ENCODE measurements at regions of chr10 and their contacts with region 1.

Region 1: DNA sequence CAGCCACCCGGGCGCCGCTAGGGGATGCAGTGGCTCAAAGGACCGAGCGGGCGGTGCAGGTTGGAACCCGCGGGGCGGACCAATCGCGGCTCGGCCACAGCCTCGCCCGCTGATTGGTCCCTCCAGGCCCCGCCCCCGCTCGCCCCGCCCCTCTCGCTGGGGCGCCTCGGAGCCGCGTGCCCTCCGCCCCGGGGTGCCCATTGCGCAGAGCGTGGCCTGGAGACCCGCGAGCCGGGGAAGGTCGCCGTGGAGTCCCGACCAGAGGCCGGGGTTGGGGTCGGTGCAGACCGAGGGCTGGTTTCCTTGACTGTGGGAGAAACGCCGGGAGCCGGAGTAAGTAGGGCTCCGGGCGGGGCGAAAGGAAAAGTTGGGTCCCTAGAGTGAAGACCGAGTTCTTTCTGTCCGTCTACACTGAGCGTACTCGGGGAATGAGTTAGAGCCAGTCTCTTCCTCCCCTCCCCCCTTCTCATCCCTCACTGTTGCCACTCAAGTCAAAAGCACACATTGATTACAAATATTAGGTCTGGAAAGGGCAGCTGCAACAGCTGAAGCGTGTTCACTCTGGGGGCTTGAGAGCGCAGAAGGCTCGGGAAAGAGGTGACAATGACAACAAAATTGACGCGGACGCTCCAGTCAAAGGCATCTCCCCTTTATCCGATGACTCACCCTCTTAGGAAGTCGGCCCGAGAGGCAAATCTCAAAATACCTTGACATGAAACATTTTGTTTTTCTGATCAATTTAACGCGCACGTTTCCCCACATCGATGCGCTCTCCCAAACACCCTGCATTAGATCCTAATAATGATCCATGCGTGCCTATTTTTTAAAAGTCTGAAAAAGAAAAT is 820 bp upstream of the GATA3 start:
- DNase-seq: peak; percentile 73 to 97 (median 89)
- ATAC-seq: peak; percentile 77
- H3K4me3 ChIP-seq: peak overlapping the region; percentile 87
- H3K4me3 Mint-ChIP-seq: peak overlapping the region; percentile 87 to 97 (median 94)
- H3K27ac ChIP-seq: peak overlapping the region; percentile 82
- H3K27ac Mint-ChIP-seq: peak overlapping the region; percentile 88 to 99 (median 95)
- H3K4me1 ChIP-seq: peaks cover 26 to 42% of the 10 kb centered on the region in 2 donors
- H3K4me1 Mint-ChIP-seq: peaks cover 14 to 45% (median 37%) of the 10 kb centered on the region in 7 donors
- H3K27me3 ChIP-seq: peaks cover 19 to 32% of the 10 kb centered on the region in 2 donors
- H3K27me3 Mint-ChIP-seq: peaks cover 20 to 30% (median 22%) of the 10 kb centered on the region in 5 donors

Region 2: GRCh38 chr10:7787857-7788638 is 265.6 kb before region 1 on chr10 and contains the starts of genes ATP5F1C and KIN:
- CTCF ChIA-PET with region 1: no interaction called
- POLR2A ChIA-PET with region 1: no interaction called
- intact Hi-C with region 1: loop called (anchors 1 to 5 kb)
- DNase-seq: peak; percentile 93 to 98 (median 96)
- ATAC-seq: peak; percentile 98
- H3K4me3 ChIP-seq: peak within 1 kb of the TSS; percentile 79
- H3K4me3 Mint-ChIP-seq: no peak within 1 kb of the TSS
- H3K27ac ChIP-seq: peak within 1 kb of the TSS; percentile 84
- H3K27ac Mint-ChIP-seq: peak within 1 kb of the TSS in 1 of 9 donors; percentile 90
- H3K4me1 ChIP-seq: peaks cover 21 to 28% of the 10 kb centered on the region in 2 donors
- H3K4me1 Mint-ChIP-seq: peaks cover 47 to 77% (median 57%) of the 10 kb centered on the region in 7 donors
- H3K27me3 ChIP-seq: no peaks in the 10 kb centered on the region
- H3K27me3 Mint-ChIP-seq: no peaks in the 10 kb centered on the region
- total RNA-seq, gene ATP5F1C: 113 to 290 (median 122) TPM
- total RNA-seq, gene KIN: 7.2 to 18.4 (median 14.3) TPM

Region 3: GRCh38 chr10:7872041-7872442 is 181.6 kb before region 1 on chr10:
- CTCF ChIA-PET with region 1: no interaction called
- POLR2A ChIA-PET with region 1: no interaction called
- intact Hi-C with region 1: loop called (anchors 5 to 10 kb)
- DNase-seq: peak in 6 of 9 donors; percentile 9 to 51 (median 44)
- ATAC-seq: peak; percentile 54
- H3K4me3 ChIP-seq: no peak overlapping the region
- H3K4me3 Mint-ChIP-seq: peak overlapping the region; percentile 8 to 84 (median 74)
- H3K27ac ChIP-seq: no peak overlapping the region
- H3K27ac Mint-ChIP-seq: peak overlapping the region in 3 of 9 donors; percentile 16 to 48 (median 41)
- H3K4me1 ChIP-seq: peaks cover 0 to 3% of the 10 kb centered on the region in 2 donors
- H3K4me1 Mint-ChIP-seq: peaks cover 6 to 61% (median 31%) of the 10 kb centered on the region in 7 donors
- H3K27me3 ChIP-seq: no peaks in the 10 kb centered on the region
- H3K27me3 Mint-ChIP-seq: no peaks in the 10 kb centered on the region

Region 4: DNA sequence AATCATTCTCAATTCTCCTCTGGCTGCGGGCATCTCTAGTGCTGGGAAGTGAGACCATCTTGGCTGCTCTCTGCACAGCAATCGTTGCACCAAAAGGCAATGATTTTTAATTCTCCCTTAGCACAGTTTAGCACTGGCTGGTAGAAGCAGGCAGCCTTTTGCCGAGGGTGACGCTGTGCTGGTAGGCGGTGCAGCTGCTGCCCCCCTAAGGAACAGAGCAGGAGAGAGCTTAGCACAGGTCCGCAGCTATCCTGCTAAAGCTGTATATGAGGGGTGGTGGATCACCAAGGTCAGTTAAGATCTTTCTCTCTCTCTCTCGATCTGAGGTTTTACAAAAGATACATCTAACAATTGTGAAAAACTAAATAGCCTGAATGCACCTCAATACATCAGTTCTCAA is 391.0 kb after region 1 on chr10:
- CTCF ChIA-PET with region 1: no interaction called
- POLR2A ChIA-PET with region 1: no interaction called
- intact Hi-C with region 1: loop called in 1 of 2 experiments (anchors 1 kb)
- DNase-seq: peak in 8 of 9 donors; percentile 14 to 63 (median 44)
- ATAC-seq: peak; percentile 94
- H3K4me3 ChIP-seq: no peak overlapping the region
- H3K4me3 Mint-ChIP-seq: no peak overlapping the region
- H3K27ac ChIP-seq: no peak overlapping the region
- H3K27ac Mint-ChIP-seq: peak overlapping the region in 3 of 9 donors; percentile 23 to 70 (median 65)
- H3K4me1 ChIP-seq: peaks cover 0 to 6% of the 10 kb centered on the region in 2 donors
- H3K4me1 Mint-ChIP-seq: peaks cover 0 to 17% (median 5%) of the 10 kb centered on the region in 7 donors
- H3K27me3 ChIP-seq: peaks cover 0 to 2% of the 10 kb centered on the region in 2 donors
- H3K27me3 Mint-ChIP-seq: peaks cover 0 to 36% (median 0%) of the 10 kb centered on the region in 5 donors

Region 5: GRCh38 chr10:8487346-8487745 is 433.7 kb after region 1 on chr10:
- CTCF ChIA-PET with region 1: no interaction called
- POLR2A ChIA-PET with region 1: no interaction called
- intact Hi-C with region 1: no loop called
- DNase-seq: no peak
- ATAC-seq: no peak
- H3K4me3 ChIP-seq: no peak overlapping the region
- H3K4me3 Mint-ChIP-seq: no peak overlapping the region
- H3K27ac ChIP-seq: no peak overlapping the region
- H3K27ac Mint-ChIP-seq: peak overlapping the region in 1 of 9 donors; percentile 12
- H3K4me1 ChIP-seq: no peaks in the 10 kb centered on the region
- H3K4me1 Mint-ChIP-seq: peaks cover 0 to 6% (median 0%) of the 10 kb centered on the region in 7 donors
- H3K27me3 ChIP-seq: no peaks in the 10 kb centered on the region
- H3K27me3 Mint-ChIP-seq: peaks cover 8 to 23% (median 15%) of the 10 kb centered on the region in 5 donors

Region 6: GRCh38 chr10:9010093-9010492 is 956.4 kb after region 1 on chr10:
- CTCF ChIA-PET with region 1: no interaction called
- POLR2A ChIA-PET with region 1: no interaction called
- intact Hi-C with region 1: loop called in 1 of 2 experiments (anchors 5 kb)
- DNase-seq: peak in 7 of 9 donors; percentile 62 to 87 (median 83)
- ATAC-seq: peak; percentile 94
- H3K4me3 ChIP-seq: no peak overlapping the region
- H3K4me3 Mint-ChIP-seq: peak overlapping the region in 9 of 10 donors; percentile 26 to 87 (median 65)
- H3K27ac ChIP-seq: no peak overlapping the region
- H3K27ac Mint-ChIP-seq: peak overlapping the region in 8 of 9 donors; percentile 72 to 96 (median 86)
- H3K4me1 ChIP-seq: peaks cover 5 to 28% of the 10 kb centered on the region in 2 donors
- H3K4me1 Mint-ChIP-seq: peaks cover 11 to 71% (median 55%) of the 10 kb centered on the region in 7 donors
- H3K27me3 ChIP-seq: no peaks in the 10 kb centered on the region
- H3K27me3 Mint-ChIP-seq: no peaks in the 10 kb centered on the region

Region 7: GRCh38 chr10:9209105-9209798 is 1155.6 kb after region 1 on chr10:
- CTCF ChIA-PET with region 1: no interaction called
- POLR2A ChIA-PET with region 1: interaction called, 4 read pairs
- intact Hi-C with region 1: loop called (anchors 1 to 2 kb)
- DNase-seq: peak; percentile 32 to 75 (median 58)
- ATAC-seq: peak; percentile 68
- H3K4me3 ChIP-seq: no peak overlapping the region
- H3K4me3 Mint-ChIP-seq: no peak overlapping the region
- H3K27ac ChIP-seq: no peak overlapping the region
- H3K27ac Mint-ChIP-seq: no peak overlapping the region
- H3K4me1 ChIP-seq: no peaks in the 10 kb centered on the region
- H3K4me1 Mint-ChIP-seq: peaks cover 2 to 8% (median 6%) of the 10 kb centered on the region in 7 donors
- H3K27me3 ChIP-seq: no peaks in the 10 kb centered on the region
- H3K27me3 Mint-ChIP-seq: peaks cover 4 to 13% (median 6%) of the 10 kb centered on the region in 5 donors

Measured in naive thymus-derived CD4-positive, alpha-beta T cell (primary cell).